ENCODE measurements at regions of chr7 and their contacts with region 1.

Region 1: DNA sequence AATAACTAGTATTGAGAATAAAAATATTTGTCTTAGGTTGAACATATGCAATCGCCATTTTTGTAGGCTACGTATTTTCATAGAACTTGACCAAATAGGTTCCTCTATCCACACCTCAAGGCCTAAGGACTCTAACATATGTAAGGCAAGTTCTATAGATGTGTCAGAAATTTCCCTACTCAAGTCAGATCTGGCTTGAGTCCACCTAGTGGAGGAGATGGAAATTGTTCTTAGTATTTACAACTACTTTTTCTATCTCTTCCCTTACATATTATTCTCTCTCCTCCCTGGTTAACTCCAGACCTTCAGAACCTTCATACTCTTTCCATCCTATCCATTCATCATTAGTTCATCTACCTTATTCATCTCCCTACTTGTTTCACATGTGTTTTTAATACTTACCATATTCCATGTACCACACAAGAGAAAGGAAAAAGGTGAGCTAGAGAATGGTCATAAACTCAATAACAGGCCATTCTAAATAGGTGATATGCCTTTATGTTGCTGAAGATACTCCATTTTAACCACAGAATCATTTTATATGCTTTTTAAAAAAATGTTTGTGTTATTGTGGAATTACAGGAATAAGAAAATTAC is 174.5 kb upstream of the HDAC9 start:
- ATAC-seq: peak in 2 of 8 experiments; percentile 44 to 48
- H3K4me3 ChIP-seq: no peak overlapping the region
- H3K27ac ChIP-seq: no peak overlapping the region
- H3K4me1 ChIP-seq: no peaks in the 10 kb centered on the region

Region 2: GRCh38 chr7:17991866-17992648 is 329.0 kb before region 1 on chr7:
- in situ Hi-C with region 1: loop called in 2 of 9 experiments (anchors 25 kb)
- ATAC-seq: peak in 1 of 8 experiments; percentile 25
- H3K4me3 ChIP-seq: no peak overlapping the region
- H3K27ac ChIP-seq: no peak overlapping the region
- H3K4me1 ChIP-seq: peaks cover 5 to 9% of the 10 kb centered on the region in 2 donors